MCF 10A (cell line): ENCODE measurements at regions of chr4 and their contacts with region 1.

Region 1: DNA sequence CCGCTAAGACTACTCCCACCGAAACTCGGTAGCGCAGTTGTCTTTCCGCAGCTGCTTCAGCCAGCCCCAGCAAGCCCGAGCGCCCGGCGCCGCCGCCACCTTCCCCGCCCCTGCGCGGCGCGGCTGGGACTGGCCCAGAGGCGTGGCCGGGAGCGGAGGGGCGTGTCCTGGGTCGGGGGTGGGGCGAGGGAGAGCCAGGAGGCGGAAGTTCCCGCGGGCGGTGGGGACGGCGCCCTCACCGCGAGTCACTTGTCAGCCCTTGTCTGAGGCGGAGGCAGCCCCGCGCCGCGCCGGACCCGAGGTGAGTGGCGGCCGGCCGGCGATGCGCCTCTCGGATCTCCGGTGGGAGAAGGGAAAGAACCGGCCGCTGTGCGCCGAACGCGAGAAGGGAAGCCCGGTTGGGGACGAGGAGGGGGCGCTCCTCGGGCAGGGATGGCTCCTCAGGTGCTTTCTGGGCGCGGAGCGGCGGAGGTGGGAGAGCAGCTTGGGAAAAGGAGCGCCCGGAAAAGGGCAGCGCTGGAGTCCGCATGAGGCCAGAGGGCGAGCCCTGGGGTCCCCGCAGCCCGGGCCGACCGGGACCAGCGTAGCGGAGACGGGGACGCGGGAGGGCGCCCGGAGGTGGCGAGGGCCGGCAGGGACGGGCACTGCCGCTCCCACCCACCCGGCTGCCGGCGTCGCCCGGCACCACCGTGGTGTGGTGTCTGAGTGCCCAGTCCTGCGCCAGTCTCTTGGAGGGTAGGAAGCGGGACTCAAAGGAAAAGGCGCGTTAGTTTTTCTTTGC is at the start of gene PDLIM5:
- DNase-seq: peak; percentile 94
- H3K4me3 Mint-ChIP-seq: peak within 1 kb of the TSS; percentile 73
- H3K27ac Mint-ChIP-seq: peak within 1 kb of the TSS; percentile 85
- H3K4me1 Mint-ChIP-seq: peaks cover 31% of the 10 kb centered on the region
- H3K27me3 Mint-ChIP-seq: no peaks in the 10 kb centered on the region
- CTCF ChIP-seq: no peak
- total RNA-seq, gene PDLIM5: 151 and 158 TPM in 2 replicates

Region 2: DNA sequence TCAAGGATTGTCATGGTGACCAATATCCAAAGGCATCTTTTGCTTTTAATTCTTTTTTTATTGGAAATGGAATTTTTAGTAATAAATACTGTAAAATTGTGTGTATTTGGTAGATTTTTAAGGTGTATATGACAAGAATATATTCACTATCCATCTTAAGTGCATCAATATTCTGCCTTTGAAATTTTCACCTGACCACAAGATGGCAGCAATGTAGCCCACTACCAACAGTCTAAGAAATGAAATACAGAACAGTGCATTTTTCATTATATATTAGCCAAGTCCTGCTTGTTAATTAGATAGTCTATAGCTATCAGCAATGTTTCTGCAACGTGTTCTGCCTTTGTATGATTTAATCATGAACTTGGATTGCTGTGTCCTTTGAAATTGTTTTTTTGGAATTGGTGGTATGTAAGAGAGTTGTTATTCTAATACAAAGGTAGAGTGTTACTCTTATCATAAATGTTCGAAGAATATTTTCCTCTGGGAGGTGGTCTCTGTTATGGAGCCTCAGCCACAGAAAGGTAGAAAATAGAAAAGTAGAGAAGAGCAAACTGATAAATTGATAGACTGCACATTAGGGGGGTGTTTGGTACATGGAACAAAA is 147.4 kb before region 1 on chr4:
- CTCF ChIA-PET with region 1: interaction called, 6 read pairs
- POLR2A ChIA-PET with region 1: interaction called, 3 read pairs
- intact Hi-C with region 1: loop called (anchors 5 kb)
- DNase-seq: peak; percentile 46
- H3K4me3 Mint-ChIP-seq: no peak overlapping the region
- H3K27ac Mint-ChIP-seq: no peak overlapping the region
- H3K4me1 Mint-ChIP-seq: peaks cover 4% of the 10 kb centered on the region
- H3K27me3 Mint-ChIP-seq: no peaks in the 10 kb centered on the region
- CTCF ChIP-seq: peak; percentile 51

Region 3: GRCh38 chr4:94463771-94464170 is 11.9 kb after region 1 on chr4:
- CTCF ChIA-PET with region 1: no interaction called
- POLR2A ChIA-PET with region 1: interaction called, 28 read pairs
- intact Hi-C with region 1: no loop called
- DNase-seq: no peak
- H3K4me3 Mint-ChIP-seq: no peak overlapping the region
- H3K27ac Mint-ChIP-seq: peak overlapping the region; percentile 68
- H3K4me1 Mint-ChIP-seq: peaks cover 55% of the 10 kb centered on the region
- H3K27me3 Mint-ChIP-seq: no peaks in the 10 kb centered on the region
- CTCF ChIP-seq: no peak

Region 4: DNA sequence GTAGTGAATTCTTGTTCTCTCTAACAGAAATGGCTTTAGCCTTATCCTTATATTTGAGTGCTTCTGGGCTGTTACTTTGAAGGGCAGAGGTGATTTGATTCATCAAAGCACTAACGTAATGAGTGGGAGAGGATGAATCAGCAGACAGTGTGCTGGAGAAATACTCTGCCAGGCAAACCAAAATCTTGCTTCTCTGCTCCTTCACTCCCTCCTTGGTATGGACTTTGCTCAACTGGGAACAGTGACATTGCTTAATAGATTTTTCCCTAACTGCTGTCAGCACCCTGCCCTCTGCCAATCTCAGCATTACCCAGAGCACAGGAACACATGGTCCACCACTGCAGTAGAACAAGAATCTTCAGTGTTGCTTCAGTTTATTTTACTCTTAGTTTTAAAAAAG is 55.8 kb after region 1 on chr4:
- CTCF ChIA-PET with region 1: no interaction called
- POLR2A ChIA-PET with region 1: interaction called, 33 read pairs
- intact Hi-C with region 1: no loop called
- DNase-seq: peak; percentile 95
- H3K4me3 Mint-ChIP-seq: no peak overlapping the region
- H3K27ac Mint-ChIP-seq: peak overlapping the region; percentile 74
- H3K4me1 Mint-ChIP-seq: peaks cover 34% of the 10 kb centered on the region
- H3K27me3 Mint-ChIP-seq: no peaks in the 10 kb centered on the region
- CTCF ChIP-seq: no peak

Region 5: DNA sequence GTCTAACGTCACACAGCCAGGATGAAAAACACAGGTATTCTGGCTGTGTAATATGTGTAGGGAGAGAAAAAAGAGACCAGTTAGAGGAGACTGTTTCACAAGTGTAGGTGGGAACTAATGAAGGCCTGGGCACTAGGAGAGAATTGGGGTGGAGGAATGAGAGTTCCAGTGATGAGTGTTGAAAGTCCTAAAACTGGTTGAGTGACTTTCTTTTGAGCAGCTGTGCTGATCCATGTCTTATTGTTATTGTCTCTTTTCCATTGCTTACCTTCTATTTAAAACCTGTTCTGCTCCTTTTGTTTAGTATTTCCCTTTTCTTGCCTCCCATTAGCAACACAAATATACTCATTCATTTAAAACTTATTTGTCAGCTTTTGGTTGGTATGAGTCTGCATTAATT is 88.6 kb after region 1 on chr4:
- CTCF ChIA-PET with region 1: interaction called, 6 read pairs
- POLR2A ChIA-PET with region 1: interaction called, 32 read pairs
- intact Hi-C with region 1: no loop called
- DNase-seq: no peak
- H3K4me3 Mint-ChIP-seq: no peak overlapping the region
- H3K27ac Mint-ChIP-seq: peak overlapping the region; percentile 9
- H3K4me1 Mint-ChIP-seq: peaks cover 22% of the 10 kb centered on the region
- H3K27me3 Mint-ChIP-seq: no peaks in the 10 kb centered on the region
- CTCF ChIP-seq: no peak

Region 6: GRCh38 chr4:94577136-94577535 is 125.3 kb after region 1 on chr4:
- CTCF ChIA-PET with region 1: no interaction called
- POLR2A ChIA-PET with region 1: interaction called, 18 read pairs
- intact Hi-C with region 1: loop called (anchors 5 kb)
- DNase-seq: peak; percentile 28
- H3K4me3 Mint-ChIP-seq: no peak overlapping the region
- H3K27ac Mint-ChIP-seq: no peak overlapping the region
- H3K4me1 Mint-ChIP-seq: no peaks in the 10 kb centered on the region
- H3K27me3 Mint-ChIP-seq: no peaks in the 10 kb centered on the region
- CTCF ChIP-seq: no peak